BJ (cell line): ENCODE measurements at regions of chr13 and their contacts with region 1.

Region 1: GRCh38 chr13:100530671-100531213 is 57.8 kb downstream of the GGACT start:
- DNase-seq: no peak
- H3K4me3 ChIP-seq: no peak overlapping the region
- H3K27me3 ChIP-seq: no peaks in the 10 kb centered on the region
- CTCF ChIP-seq: no peak

Region 2: GRCh38 chr13:100542826-100543156 is 12.0 kb after region 1 on chr13:
- CTCF ChIA-PET with region 1: interaction called, 13 read pairs
- POLR2A ChIA-PET with region 1: no interaction called
- DNase-seq: peak; percentile 9
- H3K4me3 ChIP-seq: no peak overlapping the region
- H3K27me3 ChIP-seq: no peaks in the 10 kb centered on the region
- CTCF ChIP-seq: peak; percentile 63